SK-MEL-5 (cell line): ENCODE measurements at regions of chr3 and their contacts with region 1.

Region 1: DNA sequence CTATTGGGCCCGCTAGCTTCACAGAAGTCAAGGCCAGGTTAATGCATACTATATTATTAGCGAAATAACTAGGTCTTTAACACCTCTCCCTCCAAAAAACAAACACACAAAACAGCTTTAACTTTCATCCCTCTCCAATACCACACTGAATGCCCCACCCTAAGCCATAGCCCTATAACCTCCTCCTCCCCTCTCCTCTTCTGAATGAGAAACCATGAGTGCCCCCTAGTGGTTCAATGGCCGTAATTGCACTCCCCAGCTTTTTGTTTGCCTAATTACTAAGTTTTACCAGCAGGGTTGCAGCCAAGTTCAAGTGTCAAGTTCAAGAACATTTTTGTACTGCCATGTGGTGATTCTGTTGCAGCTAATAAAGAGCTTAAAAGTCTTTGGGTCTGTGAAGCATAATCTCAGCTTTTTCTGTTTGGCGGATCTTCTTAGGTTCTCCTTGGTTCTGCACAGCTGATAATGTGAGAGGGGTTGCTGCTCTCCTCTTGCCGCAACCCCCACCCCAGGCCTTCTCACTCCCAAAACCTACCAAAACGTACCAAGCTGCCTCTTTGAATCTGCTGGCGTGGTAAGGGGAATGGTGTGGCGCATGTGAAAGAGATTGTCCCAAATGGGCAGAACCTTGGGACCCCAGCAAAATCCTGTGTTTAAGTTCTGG is 57.9 kb downstream of the RPL22L1 start:
- DNase-seq: peak; percentile 91

Region 2: DNA sequence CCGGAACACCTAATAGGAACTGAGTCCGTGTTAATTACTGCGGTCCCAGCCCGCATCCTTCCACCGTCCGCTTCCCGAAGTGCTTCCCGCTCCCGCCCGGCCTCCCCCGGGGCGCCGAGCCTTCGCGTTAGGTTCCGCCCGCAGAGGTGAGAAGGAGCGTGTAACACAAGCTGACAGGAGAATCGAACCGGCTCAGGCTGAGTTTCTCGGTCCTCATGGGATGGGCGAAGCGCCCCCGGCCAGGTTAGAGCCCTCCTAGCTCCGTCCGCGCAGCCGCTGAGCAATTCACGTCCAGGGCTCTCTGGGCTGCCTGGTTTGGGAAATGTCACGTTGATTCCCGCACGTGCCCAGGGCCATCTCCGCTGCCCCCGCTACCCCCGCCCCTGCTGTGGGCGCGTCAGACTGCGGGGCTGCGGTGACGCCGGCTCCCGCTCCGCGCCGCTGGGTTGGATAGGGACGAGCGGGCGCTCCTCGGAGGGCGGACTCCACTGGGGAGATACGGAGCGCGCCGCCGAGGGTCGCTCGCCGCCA is 392.4 kb before region 1 on chr3:
- in situ Hi-C with region 1: loop called (anchors 10 kb)
- DNase-seq: no peak

Region 3: DNA sequence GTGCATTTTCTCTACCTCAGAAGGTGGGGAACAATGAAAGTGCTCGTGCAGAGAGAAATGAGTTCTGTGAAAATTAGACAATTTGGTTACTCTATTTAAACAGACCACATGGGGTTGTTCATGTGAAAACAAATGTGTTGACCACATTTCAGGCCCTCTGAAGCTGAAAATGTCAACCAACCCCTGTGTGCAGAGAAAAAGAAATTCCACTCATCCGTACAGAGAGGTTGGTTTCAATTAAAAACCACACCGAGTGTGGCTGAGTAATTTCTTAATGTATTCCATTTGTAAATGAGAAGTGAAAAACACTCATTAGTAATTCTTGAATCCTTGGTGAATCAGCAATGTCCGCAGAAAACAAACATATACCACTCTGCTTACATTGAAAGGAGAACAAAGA is 179.3 kb before region 1 on chr3:
- in situ Hi-C with region 1: no loop called
- DNase-seq: no peak

Region 4: DNA sequence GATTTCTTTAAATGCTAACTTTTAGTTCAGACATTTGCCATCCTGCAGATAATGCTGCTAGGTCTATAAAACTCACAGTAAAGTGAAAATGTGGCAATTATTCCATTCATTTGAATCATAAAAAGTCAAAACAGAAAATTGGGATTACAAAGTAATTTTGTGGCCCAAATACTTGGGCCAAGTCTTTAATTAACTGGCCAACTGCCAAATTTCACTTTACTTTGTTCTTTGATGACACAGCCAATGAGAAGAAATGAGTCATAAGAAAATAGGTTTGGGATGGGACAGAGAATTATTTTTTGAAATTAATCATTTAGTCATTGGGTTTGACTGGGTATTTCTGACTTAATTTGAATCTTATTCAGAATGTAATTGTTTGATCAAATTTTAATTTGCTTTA is 304.3 kb after region 1 on chr3:
- in situ Hi-C with region 1: no loop called
- DNase-seq: peak; percentile 9